Naive thymus-derived CD4-positive, alpha-beta T cell (primary cell): ENCODE measurements at regions of chr2 and their contacts with region 1.

Region 1: GRCh38 chr2:37005118-37005868 is 39.0 kb upstream of the STRN start:
- DNase-seq: peak in 7 of 9 donors; percentile 15 to 46 (median 18)
- ATAC-seq: peak; percentile 80
- H3K4me3 ChIP-seq: no peak overlapping the region
- H3K4me3 Mint-ChIP-seq: peak overlapping the region in 8 of 10 donors; percentile 15 to 76 (median 56)
- H3K27ac ChIP-seq: peak overlapping the region; percentile 22
- H3K27ac Mint-ChIP-seq: peak overlapping the region; percentile 28 to 84 (median 71)
- H3K4me1 ChIP-seq: no peaks in the 10 kb centered on the region
- H3K4me1 Mint-ChIP-seq: peaks cover 5 to 17% (median 9%) of the 10 kb centered on the region in 7 donors
- H3K27me3 ChIP-seq: no peaks in the 10 kb centered on the region
- H3K27me3 Mint-ChIP-seq: no peaks in the 10 kb centered on the region

Region 2: GRCh38 chr2:36871068-36871707 is 134.1 kb before region 1 on chr2:
- CTCF ChIA-PET with region 1: no interaction called
- POLR2A ChIA-PET with region 1: no interaction called
- intact Hi-C with region 1: loop called in 1 of 2 experiments (anchors 10 kb)
- DNase-seq: no peak
- ATAC-seq: no peak
- H3K4me3 ChIP-seq: no peak overlapping the region
- H3K4me3 Mint-ChIP-seq: no peak overlapping the region
- H3K27ac ChIP-seq: no peak overlapping the region
- H3K27ac Mint-ChIP-seq: no peak overlapping the region
- H3K4me1 ChIP-seq: no peaks in the 10 kb centered on the region
- H3K4me1 Mint-ChIP-seq: peaks cover 0 to 4% (median 0%) of the 10 kb centered on the region in 7 donors
- H3K27me3 ChIP-seq: no peaks in the 10 kb centered on the region
- H3K27me3 Mint-ChIP-seq: no peaks in the 10 kb centered on the region

Region 3: DNA sequence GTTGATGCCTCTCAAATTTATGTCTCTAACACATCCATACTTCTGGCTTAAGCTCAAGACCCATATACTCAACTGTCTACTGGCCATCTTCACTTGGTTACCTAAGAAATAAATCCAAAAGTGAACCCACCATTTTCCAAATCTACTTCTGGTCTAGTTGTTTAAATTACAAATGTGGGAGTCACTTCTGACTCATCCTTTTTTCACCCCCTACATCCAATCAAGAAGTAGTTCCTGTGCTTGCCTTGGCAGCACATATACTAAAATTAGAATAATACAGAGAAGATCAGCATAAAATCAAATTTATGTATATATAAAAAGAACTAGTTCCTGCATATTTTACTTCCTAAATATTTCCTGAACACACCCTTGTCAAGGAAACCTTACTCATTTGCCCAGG is 92.6 kb before region 1 on chr2:
- CTCF ChIA-PET with region 1: no interaction called
- POLR2A ChIA-PET with region 1: no interaction called
- intact Hi-C with region 1: loop called in 1 of 2 experiments (anchors 5 kb)
- DNase-seq: no peak
- ATAC-seq: no peak
- H3K4me3 ChIP-seq: no peak overlapping the region
- H3K4me3 Mint-ChIP-seq: no peak overlapping the region
- H3K27ac ChIP-seq: no peak overlapping the region
- H3K27ac Mint-ChIP-seq: no peak overlapping the region
- H3K4me1 ChIP-seq: no peaks in the 10 kb centered on the region
- H3K4me1 Mint-ChIP-seq: peaks cover 0 to 8% (median 5%) of the 10 kb centered on the region in 7 donors
- H3K27me3 ChIP-seq: no peaks in the 10 kb centered on the region
- H3K27me3 Mint-ChIP-seq: no peaks in the 10 kb centered on the region

Region 4: GRCh38 chr2:37083873-37084794 is 78.8 kb after region 1 on chr2 and contains the starts of genes GPATCH11 and HEATR5B:
- CTCF ChIA-PET with region 1: no interaction called
- POLR2A ChIA-PET with region 1: no interaction called
- intact Hi-C with region 1: no loop called
- DNase-seq: peak; percentile 76 to 94 (median 92)
- ATAC-seq: peak; percentile 87
- H3K4me3 ChIP-seq: peak within 1 kb of the TSS; percentile 74
- H3K4me3 Mint-ChIP-seq: peak within 1 kb of the TSS in 1 of 10 donors; percentile 64
- H3K27ac ChIP-seq: peak within 1 kb of the TSS; percentile 85
- H3K27ac Mint-ChIP-seq: no peak within 1 kb of the TSS
- H3K4me1 ChIP-seq: peaks cover 35 to 45% of the 10 kb centered on the region in 2 donors
- H3K4me1 Mint-ChIP-seq: peaks cover 8 to 62% (median 50%) of the 10 kb centered on the region in 7 donors
- H3K27me3 ChIP-seq: no peaks in the 10 kb centered on the region
- H3K27me3 Mint-ChIP-seq: no peaks in the 10 kb centered on the region
- total RNA-seq, gene GPATCH11: 6.0 to 19.0 (median 11.1) TPM
- total RNA-seq, gene HEATR5B: 25.2 to 50.5 (median 39.3) TPM